Dorsolateral prefrontal cortex (tissue), 120 donors: ENCODE measurements at regions of chr3 and their contacts with region 1.

Region 1: DNA sequence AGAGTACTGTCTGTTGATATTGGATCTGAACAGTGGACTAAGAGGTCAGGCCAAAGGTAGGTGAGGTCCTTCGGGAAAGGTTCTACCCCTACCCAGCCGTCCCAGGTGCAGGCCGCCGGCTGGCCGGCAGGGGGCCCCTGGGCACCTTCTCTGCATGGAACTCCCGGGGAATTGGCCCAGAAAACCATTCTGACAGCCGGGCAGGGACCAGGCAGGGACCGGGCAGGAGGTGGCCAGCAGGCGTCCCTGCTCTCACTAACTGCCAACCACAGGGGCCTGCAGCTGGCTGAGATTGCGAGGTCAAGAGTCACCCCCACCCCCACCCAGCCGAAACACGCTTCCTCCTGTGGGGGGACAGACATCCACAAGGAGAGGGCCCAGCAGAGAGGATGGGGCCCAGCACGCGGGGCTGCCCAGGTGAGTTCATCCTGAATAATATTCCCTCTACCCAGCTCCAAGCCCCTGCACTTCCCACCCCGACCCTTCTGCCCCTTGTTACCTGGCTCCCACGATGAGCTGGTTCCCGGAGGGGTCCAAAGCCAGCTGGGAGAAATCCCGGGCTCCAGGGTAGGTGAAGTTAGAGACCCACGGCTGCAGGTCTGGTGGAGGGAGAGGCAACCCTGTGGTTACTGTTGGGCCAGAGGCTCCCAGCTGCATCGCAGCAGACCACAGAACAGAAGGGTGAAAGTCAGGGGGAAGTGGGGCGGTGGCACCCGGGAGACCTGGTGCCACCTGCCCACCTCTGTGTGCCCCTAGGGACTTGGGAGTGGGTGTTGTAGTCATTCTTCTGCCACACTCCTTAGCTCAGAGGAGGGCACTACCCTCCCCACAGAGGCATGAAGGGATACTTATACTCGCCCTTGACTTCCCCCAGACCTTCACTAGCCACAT is 84.4 kb downstream of the SEMA5B start:
- DNase-seq: peak; percentile 32 to 80 (median 64)
- H3K4me3 ChIP-seq: no peak overlapping the region
- H3K27ac ChIP-seq: no peak overlapping the region
- H3K27me3 ChIP-seq: no peaks in the 10 kb centered on the region
- CTCF ChIP-seq: peak; percentile 52 to 94 (median 87)

Region 2: GRCh38 chr3:121724130-121724529 is 1219.1 kb before region 1 on chr3:
- intact Hi-C with region 1: no loop called
- DNase-seq: no peak
- H3K4me3 ChIP-seq: no peak overlapping the region
- H3K27ac ChIP-seq: no peak overlapping the region
- H3K27me3 ChIP-seq: no peaks in the 10 kb centered on the region
- CTCF ChIP-seq: no peak

Region 3: GRCh38 chr3:123028233-123028828 is 85.1 kb after region 1 on chr3:
- intact Hi-C with region 1: loop called (anchors 2 kb)
- DNase-seq: peak in 8 of 10 donors; percentile 25 to 46 (median 40)
- H3K4me3 ChIP-seq: peak overlapping the region; percentile 48 to 80 (median 69)
- H3K27ac ChIP-seq: peak overlapping the region in 34 of 59 donors; percentile 2 to 77 (median 48)
- H3K27me3 ChIP-seq: peaks cover 0 to 34% (median 0%) of the 10 kb centered on the region in 45 donors
- CTCF ChIP-seq: peak in 55 of 56 donors; percentile 46 to 81 (median 65)

Region 4: GRCh38 chr3:123258811-123259420 is 315.7 kb after region 1 on chr3:
- intact Hi-C with region 1: loop called (anchors 5 to 10 kb)
- DNase-seq: no peak
- H3K4me3 ChIP-seq: no peak overlapping the region
- H3K27ac ChIP-seq: no peak overlapping the region
- H3K27me3 ChIP-seq: no peaks in the 10 kb centered on the region
- CTCF ChIP-seq: peak; percentile 42 to 85 (median 67)

Region 5: GRCh38 chr3:123267821-123268220 is 324.6 kb after region 1 on chr3:
- intact Hi-C with region 1: loop called in 1 of 2 experiments (anchors 10 kb)
- DNase-seq: no peak
- H3K4me3 ChIP-seq: no peak overlapping the region
- H3K27ac ChIP-seq: no peak overlapping the region
- H3K27me3 ChIP-seq: no peaks in the 10 kb centered on the region
- CTCF ChIP-seq: peak in 3 of 56 donors; percentile 8 to 13 (median 11)

Region 6: GRCh38 chr3:123568034-123568433 is 624.9 kb after region 1 on chr3:
- intact Hi-C with region 1: loop called in 1 of 2 experiments (anchors 10 kb)
- DNase-seq: peak in 7 of 10 donors; percentile 19 to 69 (median 52)
- H3K4me3 ChIP-seq: peak overlapping the region in 10 of 59 donors; percentile 1 to 45 (median 19)
- H3K27ac ChIP-seq: peak overlapping the region in 57 of 59 donors; percentile 8 to 93 (median 76)
- H3K27me3 ChIP-seq: no peaks in the 10 kb centered on the region
- CTCF ChIP-seq: peak in 1 of 56 donors; percentile 9

Region 7: DNA sequence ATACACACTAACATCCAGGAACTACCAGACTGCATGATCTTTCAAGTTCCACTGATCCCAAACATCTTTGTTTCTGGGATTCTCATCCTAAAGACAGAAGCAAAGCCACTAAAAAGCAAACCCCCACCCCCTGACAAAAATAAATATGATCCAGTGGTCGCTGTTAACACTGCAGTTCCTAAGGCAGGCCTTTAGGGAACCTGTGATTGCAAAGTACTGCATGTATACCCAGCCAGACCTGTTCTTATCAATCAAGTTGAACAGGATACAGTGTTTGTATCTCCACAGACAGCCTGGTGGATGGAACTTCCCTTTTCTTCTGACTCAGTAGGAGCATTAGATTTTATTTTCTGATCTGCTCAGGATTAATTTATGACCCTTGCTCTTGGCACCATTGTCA is 1370.0 kb after region 1 on chr3:
- intact Hi-C with region 1: no loop called
- DNase-seq: no peak
- H3K4me3 ChIP-seq: no peak overlapping the region
- H3K27ac ChIP-seq: no peak overlapping the region
- H3K27me3 ChIP-seq: no peaks in the 10 kb centered on the region
- CTCF ChIP-seq: no peak